HepG2 (cell line): ENCODE measurements at regions of chr1 and their contacts with region 1.

Region 1: DNA sequence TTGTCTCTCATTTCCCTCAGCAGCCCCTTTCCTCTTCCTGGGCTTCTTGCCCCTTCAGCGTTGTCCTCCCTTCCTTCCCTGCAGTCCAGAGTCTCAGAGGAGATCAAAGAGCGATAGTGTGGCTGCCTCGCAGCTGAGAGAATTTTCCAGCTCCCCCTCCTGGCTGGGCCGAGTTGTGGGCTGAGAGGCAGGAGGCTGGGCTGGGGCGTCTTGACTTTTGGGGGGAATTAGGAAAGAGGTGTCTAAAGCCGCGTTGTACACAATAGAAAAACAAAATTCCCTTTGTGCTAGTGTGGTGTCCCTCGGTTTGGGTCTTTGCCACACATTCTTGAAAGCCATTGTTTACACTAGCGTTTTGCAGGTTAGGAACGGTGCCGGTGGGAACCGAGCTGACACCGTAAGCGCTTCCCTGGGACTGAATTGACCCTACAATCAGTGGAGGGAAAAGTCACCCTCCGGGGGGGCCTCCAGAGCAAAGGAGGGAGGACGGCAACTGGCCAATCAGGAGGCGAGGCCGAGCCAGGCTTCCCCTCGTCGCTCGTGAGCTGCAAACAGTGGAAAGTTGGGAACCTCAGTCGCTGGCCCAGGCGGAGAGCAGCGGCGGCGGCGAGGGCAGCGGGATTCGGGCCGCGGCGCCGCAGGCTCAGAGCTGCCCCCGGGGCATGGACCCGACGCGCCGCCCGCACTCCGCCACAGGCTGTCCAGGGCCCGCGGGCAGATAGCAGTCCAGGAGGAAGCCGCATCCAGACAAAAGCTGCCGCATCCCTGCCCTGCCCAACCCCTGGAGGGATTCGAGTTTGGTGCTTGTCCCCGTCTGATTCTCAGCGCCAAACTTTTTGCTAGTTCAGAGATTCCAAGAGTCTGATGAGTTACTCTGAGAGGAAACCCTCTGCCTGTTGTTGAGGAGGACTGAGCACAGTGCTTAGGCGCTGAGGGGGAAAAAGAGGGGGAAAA is at the start of gene HMCN1:
- DNase-seq: peak; percentile 4
- ATAC-seq: peak; percentile 96
- H3K4me3 ChIP-seq: peak within 1 kb of the TSS; percentile 41 to 65 (median 46)
- H3K27ac ChIP-seq: no peak within 1 kb of the TSS
- H3K4me1 ChIP-seq: peaks cover 19% of the 10 kb centered on the region
- H3K27me3 ChIP-seq: peaks cover 1 to 16% of the 10 kb centered on the region in 2 experiments; a peak in 4 of 5 replicates
- CTCF ChIP-seq: peak; percentile 61
- EP300 ChIP-seq: no peak
- POLR2A ChIP-seq: no peak
- RAD21 ChIP-seq: no peak
- total RNA-seq, gene HMCN1: not detected in 2 replicates

Region 2: DNA sequence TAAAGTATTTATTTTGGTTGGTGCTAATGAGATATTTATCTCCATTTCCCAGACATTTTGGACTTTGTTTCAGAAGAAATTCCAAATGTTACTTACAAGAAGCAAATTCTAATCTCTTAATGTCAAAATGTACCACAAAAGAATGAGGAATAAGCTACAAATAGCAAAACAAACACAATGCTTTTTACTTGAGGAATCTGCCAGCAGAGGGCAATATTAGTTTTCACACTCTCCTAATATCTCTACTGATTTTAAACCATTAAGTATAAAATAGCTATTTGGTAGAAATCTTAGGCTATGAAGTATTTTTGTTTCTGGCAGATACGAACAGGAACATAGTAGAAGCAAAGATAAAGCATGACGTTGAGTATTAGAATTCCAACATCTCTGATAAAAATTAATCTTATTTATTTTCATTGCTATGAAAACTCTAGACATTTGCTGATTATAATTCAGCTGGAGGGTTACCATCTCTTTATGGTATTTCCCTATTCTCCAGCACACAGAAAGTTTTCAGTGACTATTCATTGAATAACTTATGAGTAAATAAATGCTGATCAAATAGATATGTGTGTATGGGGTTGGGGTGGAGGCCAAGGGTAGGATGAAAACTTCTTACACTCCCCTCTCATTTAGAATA is 13.3 kb before region 1 on chr1:
- CTCF ChIA-PET with region 1: no interaction called
- POLR2A ChIA-PET with region 1: no interaction called
- in situ Hi-C with region 1: no loop called
- intact Hi-C with region 1: loop called (anchors 2 kb)
- DNase-seq: peak; percentile 17
- ATAC-seq: 0 out of 3 replicates have a peak, but pooled peaks have one; percentile 30
- H3K4me3 ChIP-seq: no peak overlapping the region
- H3K27ac ChIP-seq: no peak overlapping the region
- H3K4me1 ChIP-seq: no peaks in the 10 kb centered on the region
- H3K27me3 ChIP-seq: no peaks in the 10 kb centered on the region
- CTCF ChIP-seq: peak; percentile 34; the same call in 1 of the 2 replicates
- EP300 ChIP-seq: no peak
- POLR2A ChIP-seq: no peak
- RAD21 ChIP-seq: no peak